ENCODE measurements at regions of chr2 and their contacts with region 1.

Region 1: GRCh38 chr2:218357236-218358159 is 841 bp downstream of the CATIP start:
- DNase-seq: no peak
- ATAC-seq: no peak; the same call in 1 of the 2 replicates
- H3K4me3 Mint-ChIP-seq: peak overlapping the region; percentile 44
- H3K27ac Mint-ChIP-seq: peak overlapping the region; percentile 22
- H3K4me1 Mint-ChIP-seq: peaks cover 17% of the 10 kb centered on the region
- H3K27me3 Mint-ChIP-seq: no peaks in the 10 kb centered on the region
- CTCF ChIP-seq: no peak

Region 2: DNA sequence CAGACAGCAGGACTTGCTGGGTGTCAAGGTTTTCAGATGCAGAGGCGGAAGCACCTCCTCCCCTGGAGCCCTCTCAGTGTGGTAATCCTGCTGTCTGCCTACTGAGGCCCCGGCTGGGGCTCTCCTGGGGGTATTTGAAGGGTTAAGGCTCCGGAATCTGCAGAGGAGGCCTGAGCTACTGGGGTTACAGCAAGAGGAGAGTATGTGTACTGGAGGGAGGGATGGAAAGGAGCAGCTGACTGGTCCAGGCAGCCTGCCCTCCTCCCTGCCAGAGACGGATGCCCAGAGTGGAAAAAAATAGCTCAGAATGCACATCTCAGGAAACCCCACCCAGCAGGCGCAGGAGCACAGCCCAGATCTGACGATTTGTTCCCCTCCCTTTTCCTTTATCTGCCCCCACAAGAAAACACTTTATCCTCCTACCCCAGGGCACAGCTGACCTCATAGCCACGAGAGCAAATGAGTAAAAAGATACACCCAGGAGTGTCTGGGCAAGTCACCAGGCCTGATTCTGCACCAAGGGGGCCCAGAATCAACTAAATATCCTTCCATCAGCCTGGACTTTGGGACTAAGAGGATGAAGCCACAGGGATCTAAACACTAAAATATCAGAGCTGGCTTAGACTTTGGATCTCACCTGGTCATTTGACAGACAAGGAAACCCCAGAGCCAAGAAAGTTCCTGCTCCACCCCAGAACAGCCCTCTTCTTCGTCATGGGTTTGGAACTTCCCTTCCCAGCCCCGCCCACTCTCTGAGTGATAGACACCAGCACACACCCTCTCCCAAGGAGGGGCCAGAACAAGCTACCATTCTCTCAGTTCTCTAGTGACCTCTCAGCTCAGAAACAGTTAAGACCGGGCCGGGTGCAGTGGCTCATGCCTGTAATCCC is 70.7 kb before region 1 on chr2:
- CTCF ChIA-PET with region 1: interaction called, 14 read pairs
- POLR2A ChIA-PET with region 1: interaction called, 6 read pairs
- DNase-seq: peak; percentile 78
- ATAC-seq: peak; percentile 93
- H3K4me3 Mint-ChIP-seq: no peak overlapping the region; the same call in 1 of the 2 replicates
- H3K27ac Mint-ChIP-seq: peak overlapping the region; percentile 43
- H3K4me1 Mint-ChIP-seq: peaks cover 26% of the 10 kb centered on the region
- H3K27me3 Mint-ChIP-seq: 0 out of 2 replicates have a peak, but pooled peaks cover 4% of the 10 kb centered on the region
- CTCF ChIP-seq: no peak

Region 3: GRCh38 chr2:218295029-218295428 is 62.5 kb before region 1 on chr2:
- CTCF ChIA-PET with region 1: interaction called, 16 read pairs
- POLR2A ChIA-PET with region 1: interaction called, 6 read pairs
- DNase-seq: no peak
- ATAC-seq: no peak
- H3K4me3 Mint-ChIP-seq: no peak overlapping the region
- H3K27ac Mint-ChIP-seq: no peak overlapping the region
- H3K4me1 Mint-ChIP-seq: peaks cover 43% of the 10 kb centered on the region
- H3K27me3 Mint-ChIP-seq: peaks cover 4% of the 10 kb centered on the region; the same call in 1 of the 2 replicates
- CTCF ChIP-seq: no peak

Region 4: GRCh38 chr2:218301176-218301819 is 56.2 kb before region 1 on chr2:
- CTCF ChIA-PET with region 1: interaction called, 22 read pairs
- POLR2A ChIA-PET with region 1: no interaction called
- DNase-seq: peak; percentile 93
- ATAC-seq: peak; percentile 89
- H3K4me3 Mint-ChIP-seq: no peak overlapping the region
- H3K27ac Mint-ChIP-seq: no peak overlapping the region
- H3K4me1 Mint-ChIP-seq: no peaks in the 10 kb centered on the region
- H3K27me3 Mint-ChIP-seq: no peaks in the 10 kb centered on the region; the same call in 1 of the 2 replicates
- CTCF ChIP-seq: peak; percentile 98

Region 5: DNA sequence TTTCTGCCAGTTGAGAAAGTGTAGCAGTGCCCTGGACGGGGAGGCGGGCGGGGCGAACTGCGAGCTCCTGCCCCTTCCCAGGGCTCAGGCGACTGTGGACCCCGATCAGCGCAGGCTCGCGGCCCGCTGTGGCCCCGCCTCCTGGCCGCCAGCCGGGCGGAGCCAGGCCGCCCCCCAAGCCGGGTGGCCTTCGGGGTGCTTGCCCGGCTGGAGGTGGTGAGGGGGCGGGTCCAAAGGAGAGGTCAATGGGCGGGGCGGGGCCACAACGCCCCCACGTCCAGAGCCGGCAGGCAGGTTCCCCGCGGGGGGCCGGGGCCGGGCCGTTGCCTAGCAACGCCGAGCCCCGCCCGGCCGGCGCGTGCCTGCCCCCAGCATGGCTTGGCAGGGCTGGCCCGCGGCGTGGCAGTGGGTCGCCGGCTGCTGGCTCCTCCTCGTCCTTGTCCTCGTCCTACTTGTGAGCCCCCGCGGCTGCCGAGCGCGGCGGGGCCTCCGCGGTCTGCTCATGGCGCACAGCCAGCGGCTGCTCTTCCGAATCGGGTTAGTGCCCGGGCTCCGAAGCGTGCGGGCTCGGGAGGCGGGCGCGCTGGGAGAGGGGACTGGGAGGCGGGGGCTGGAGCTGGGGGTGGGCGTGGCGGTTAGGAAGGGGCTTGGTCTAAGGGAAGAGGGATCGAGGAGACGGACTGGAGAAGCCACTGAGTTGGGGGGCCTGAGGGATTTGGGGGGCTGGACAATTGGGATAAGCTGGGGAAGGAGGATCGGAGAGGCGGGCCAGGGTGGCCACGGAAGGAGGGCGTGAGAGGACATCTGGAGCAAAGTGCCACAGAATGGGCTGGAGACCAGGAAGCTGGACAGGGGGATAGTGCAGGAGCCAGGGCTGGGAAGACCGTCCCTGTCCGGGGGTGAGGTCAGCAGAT is 34.3 kb before region 1 on chr2:
- CTCF ChIA-PET with region 1: interaction called, 36 read pairs
- POLR2A ChIA-PET with region 1: no interaction called
- DNase-seq: peak; percentile 89
- ATAC-seq: peak; percentile 85
- H3K4me3 Mint-ChIP-seq: peak overlapping the region; percentile 98
- H3K27ac Mint-ChIP-seq: peak overlapping the region; percentile 94
- H3K4me1 Mint-ChIP-seq: peaks cover 51% of the 10 kb centered on the region
- H3K27me3 Mint-ChIP-seq: no peaks in the 10 kb centered on the region
- CTCF ChIP-seq: no peak

Region 6: GRCh38 chr2:218368621-218369153 is 11.2 kb after region 1 on chr2:
- CTCF ChIA-PET with region 1: interaction called, 11 read pairs
- POLR2A ChIA-PET with region 1: interaction called, 5 read pairs
- DNase-seq: peak; percentile 47
- ATAC-seq: peak; percentile 54
- H3K4me3 Mint-ChIP-seq: peak overlapping the region; percentile 77
- H3K27ac Mint-ChIP-seq: no peak overlapping the region
- H3K4me1 Mint-ChIP-seq: peaks cover 6% of the 10 kb centered on the region; the same call in 1 of the 2 replicates
- H3K27me3 Mint-ChIP-seq: no peaks in the 10 kb centered on the region
- CTCF ChIP-seq: no peak

Region 7: GRCh38 chr2:218387374-218388194 is 30.1 kb after region 1 on chr2:
- CTCF ChIA-PET with region 1: interaction called, 13 read pairs
- POLR2A ChIA-PET with region 1: no interaction called
- DNase-seq: peak; percentile 83
- ATAC-seq: peak; percentile 93
- H3K4me3 Mint-ChIP-seq: peak overlapping the region; percentile 77
- H3K27ac Mint-ChIP-seq: peak overlapping the region; percentile 72
- H3K4me1 Mint-ChIP-seq: peaks cover 10% of the 10 kb centered on the region
- H3K27me3 Mint-ChIP-seq: peaks cover 29% of the 10 kb centered on the region
- CTCF ChIP-seq: no peak

Measured in WTC11 (cell line).